Ascending aorta (tissue), 2 donors: ENCODE measurements at regions of chr11 and their contacts with region 1.

Region 1: GRCh38 chr11:92311616-92312449 is 87.2 kb downstream of the FAT3 start:
- DNase-seq: no peak
- H3K4me3 ChIP-seq: no peak overlapping the region
- H3K27ac ChIP-seq: no peak overlapping the region
- H3K4me1 ChIP-seq: peaks cover 15 to 29% of the 10 kb centered on the region in 2 donors
- H3K27me3 ChIP-seq: no peaks in the 10 kb centered on the region
- CTCF ChIP-seq: no peak

Region 2: DNA sequence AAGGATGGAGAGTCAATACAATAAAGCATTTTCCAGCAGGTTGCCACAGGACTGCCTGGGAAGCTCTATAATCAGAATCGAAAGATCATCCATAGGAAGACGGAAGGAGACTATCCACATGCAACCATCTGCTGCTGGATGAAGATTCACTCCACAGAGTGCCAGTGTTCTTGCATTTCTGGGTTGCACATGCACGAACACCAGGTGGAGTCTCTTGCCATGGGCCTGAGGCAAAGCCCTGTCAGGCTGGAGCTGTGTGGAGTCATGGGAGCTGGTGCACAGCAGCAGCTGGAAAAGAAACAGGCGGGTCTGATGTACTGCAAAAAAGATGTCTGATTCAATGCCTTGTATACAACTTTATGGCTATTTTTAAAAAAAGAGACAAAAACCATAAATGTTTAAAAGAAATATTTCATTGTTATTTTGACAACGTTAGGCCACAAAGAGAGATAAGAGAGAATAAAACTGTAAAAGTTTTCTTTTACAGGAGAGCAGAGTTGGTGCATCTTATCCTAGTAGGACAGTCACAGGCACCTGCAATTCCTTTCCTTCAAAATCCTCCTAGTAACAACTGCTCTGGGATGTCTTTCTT is 100.2 kb before region 1 on chr11:
- intact Hi-C with region 1: no loop called
- DNase-seq: peak in 1 of 2 donors; percentile 69
- H3K4me3 ChIP-seq: no peak overlapping the region
- H3K27ac ChIP-seq: no peak overlapping the region
- H3K4me1 ChIP-seq: no peaks in the 10 kb centered on the region
- H3K27me3 ChIP-seq: no peaks in the 10 kb centered on the region
- CTCF ChIP-seq: peak; percentile 20 to 57 (median 44)

Region 3: DNA sequence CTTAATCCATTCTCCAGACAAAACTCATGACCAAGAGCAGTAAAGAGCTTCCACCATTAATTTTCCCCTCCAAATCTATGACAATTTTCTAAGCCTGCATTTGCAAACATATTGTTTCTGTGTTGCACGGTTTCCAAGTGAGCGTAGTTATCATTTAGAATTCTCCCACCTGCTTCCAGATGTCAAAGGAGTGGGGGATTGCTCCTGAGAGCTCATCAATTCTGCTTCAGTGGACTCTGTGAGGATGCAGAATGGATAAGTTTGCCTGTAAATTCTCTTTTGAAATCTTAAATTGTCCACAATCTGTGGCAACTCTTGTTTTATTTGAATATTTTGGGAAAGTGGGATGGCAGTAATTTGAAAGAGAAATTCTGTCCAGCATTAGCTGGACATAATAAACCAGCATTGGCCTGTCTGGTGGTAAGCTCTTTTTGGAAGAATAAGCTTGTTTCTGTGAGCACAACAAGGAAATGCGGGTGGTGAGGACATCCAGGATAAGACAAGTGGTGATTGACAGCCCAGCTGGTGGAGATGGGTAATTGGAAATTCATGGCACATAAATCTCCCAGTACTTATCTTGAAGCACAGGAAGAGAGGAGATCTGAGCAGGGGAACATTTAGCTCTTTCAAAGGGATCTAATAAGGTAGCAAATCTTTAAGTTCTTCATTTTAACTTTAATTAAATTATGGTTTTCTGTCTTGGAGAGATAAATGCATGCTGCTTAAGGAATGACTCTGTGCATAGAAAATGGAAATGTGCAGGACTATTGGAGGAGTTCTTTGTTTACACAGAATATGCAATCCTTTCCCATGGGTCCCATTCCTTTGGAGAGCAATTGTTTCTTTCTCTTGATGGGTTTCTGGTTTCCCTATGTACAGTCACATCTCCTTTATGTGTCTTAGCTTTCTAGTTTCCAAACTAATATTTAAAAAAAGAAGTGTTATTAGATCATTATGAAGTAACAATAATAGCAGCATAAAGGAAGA is 14.0 kb before region 1 on chr11:
- intact Hi-C with region 1: loop called (anchors 2 kb)
- DNase-seq: no peak
- H3K4me3 ChIP-seq: no peak overlapping the region
- H3K27ac ChIP-seq: no peak overlapping the region
- H3K4me1 ChIP-seq: peaks cover 0 to 9% of the 10 kb centered on the region in 2 donors
- H3K27me3 ChIP-seq: no peaks in the 10 kb centered on the region
- CTCF ChIP-seq: no peak